CD8-positive, alpha-beta T cell (primary cell): ENCODE measurements at regions of chr12 and their contacts with region 1.

Region 1: DNA sequence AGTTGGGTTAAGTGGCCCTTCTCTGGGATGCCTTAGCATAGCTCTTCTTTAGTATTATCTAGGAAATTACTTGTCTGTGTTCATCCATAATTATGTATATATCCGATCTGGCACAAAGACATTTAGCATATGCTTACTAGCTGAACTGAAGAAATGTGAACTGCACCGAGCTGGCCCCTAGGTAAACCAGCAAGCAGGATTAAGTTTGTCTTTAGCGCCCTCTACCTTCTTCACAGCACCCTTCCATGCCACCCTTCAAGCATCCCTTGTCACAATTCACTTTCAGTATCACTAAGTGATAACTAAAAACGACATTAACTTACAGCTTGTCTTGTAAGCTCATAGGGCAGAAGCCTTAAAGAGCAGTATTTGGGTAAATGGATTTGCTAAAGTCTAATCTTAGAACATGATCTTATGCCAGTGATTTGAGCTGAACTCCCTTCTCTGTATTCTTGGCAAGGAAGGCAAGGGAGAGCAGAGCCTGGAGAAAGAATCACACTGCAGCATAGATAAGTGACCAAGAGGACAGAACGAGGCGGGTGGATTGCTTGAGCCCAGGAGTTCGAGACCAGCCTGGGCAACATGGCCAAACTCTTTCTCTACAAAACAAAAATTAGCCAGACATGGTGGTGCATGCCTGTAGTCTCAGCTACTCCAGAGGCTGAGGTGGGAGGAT is 2.6 kb upstream of the HAL start:
- DNase-seq: peak; percentile 9 to 78 (median 36)
- ATAC-seq: peak; percentile 93
- H3K4me3 ChIP-seq: no peak overlapping the region
- H3K4me3 Mint-ChIP-seq: no peak overlapping the region
- H3K27ac ChIP-seq: no peak overlapping the region
- H3K27ac Mint-ChIP-seq: peak overlapping the region; percentile 24
- H3K4me1 ChIP-seq: no peaks in the 10 kb centered on the region
- H3K4me1 Mint-ChIP-seq: peaks cover 3% of the 10 kb centered on the region
- H3K27me3 ChIP-seq: no peaks in the 10 kb centered on the region
- H3K27me3 Mint-ChIP-seq: no peaks in the 10 kb centered on the region
- CTCF ChIP-seq: peak; percentile 69

Region 2: GRCh38 chr12:95820102-95820703 is 178.5 kb before region 1 on chr12:
- CTCF ChIA-PET with region 1: no interaction called
- POLR2A ChIA-PET with region 1: no interaction called
- intact Hi-C with region 1: loop called in 1 of 2 experiments (anchors 5 kb)
- DNase-seq: peak in 2 of 9 experiments; percentile 16 to 24
- ATAC-seq: no peak
- H3K4me3 ChIP-seq: no peak overlapping the region
- H3K4me3 Mint-ChIP-seq: no peak overlapping the region
- H3K27ac ChIP-seq: no peak overlapping the region
- H3K27ac Mint-ChIP-seq: no peak overlapping the region
- H3K4me1 ChIP-seq: no peaks in the 10 kb centered on the region
- H3K4me1 Mint-ChIP-seq: no peaks in the 10 kb centered on the region
- H3K27me3 ChIP-seq: no peaks in the 10 kb centered on the region
- H3K27me3 Mint-ChIP-seq: peaks cover 17% of the 10 kb centered on the region
- CTCF ChIP-seq: no peak

Region 3: DNA sequence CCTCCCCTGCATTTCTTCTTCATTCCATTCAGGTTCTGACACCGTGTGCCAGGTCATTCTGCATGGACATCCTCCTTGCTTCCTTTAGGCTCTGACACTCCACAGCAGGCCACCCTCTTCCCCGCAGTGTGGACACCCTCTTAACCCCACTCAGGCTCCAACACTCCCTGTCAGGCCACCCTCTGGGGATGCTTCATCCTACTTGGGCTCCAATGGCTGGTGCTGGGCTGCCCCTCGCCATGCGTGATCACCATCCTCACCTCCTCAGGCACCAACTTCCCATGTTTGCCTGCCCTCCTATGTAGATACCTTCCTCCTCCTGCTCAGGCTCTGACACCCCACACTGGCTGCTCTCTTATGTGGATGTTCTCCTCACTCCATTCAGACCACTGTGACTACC is 146.6 kb before region 1 on chr12:
- CTCF ChIA-PET with region 1: no interaction called
- POLR2A ChIA-PET with region 1: no interaction called
- intact Hi-C with region 1: no loop called
- DNase-seq: no peak
- ATAC-seq: no peak
- H3K4me3 ChIP-seq: no peak overlapping the region
- H3K4me3 Mint-ChIP-seq: no peak overlapping the region
- H3K27ac ChIP-seq: no peak overlapping the region
- H3K27ac Mint-ChIP-seq: no peak overlapping the region
- H3K4me1 ChIP-seq: no peaks in the 10 kb centered on the region
- H3K4me1 Mint-ChIP-seq: peaks cover 11% of the 10 kb centered on the region
- H3K27me3 ChIP-seq: peaks cover 0 to 2% of the 10 kb centered on the region in 2 experiments
- H3K27me3 Mint-ChIP-seq: peaks cover 5% of the 10 kb centered on the region
- CTCF ChIP-seq: no peak

Region 4: DNA sequence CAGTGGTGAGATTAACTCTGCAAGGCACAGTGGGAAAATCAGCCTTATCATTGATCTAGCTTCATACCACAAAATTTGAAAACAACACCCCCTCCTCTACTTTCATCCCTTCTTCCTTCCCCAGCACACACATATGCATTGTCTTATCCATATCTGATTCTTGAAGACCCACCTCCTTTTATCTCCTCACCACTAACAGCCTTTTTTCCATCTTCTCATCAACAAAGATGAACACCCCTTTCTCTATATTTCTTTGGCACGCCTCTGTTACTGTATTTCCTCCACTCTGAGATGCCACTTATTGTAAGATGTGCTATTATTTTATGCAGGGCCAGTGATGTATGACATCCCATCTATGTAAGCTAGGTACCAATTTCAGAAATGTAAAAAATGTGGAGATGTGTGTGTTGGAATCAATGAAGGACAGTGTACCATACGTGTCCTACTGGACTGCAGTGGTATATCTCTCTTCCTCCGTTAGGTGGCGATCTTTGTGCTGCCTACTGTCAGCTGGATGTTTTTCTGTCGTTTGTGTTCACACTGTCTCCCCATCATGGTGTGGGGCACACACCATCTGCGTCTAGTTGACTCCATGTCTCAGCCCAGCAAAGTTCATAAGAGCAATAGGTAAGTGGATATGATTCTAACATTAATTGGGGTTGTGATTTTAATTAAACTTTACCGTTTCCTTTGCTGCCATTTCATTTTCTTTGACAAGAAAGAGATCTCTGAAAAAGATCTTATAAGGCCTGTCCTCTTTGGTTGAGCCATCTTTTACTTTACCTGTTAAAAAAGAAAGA is 80.4 kb before region 1 on chr12:
- CTCF ChIA-PET with region 1: interaction called, 105 read pairs
- POLR2A ChIA-PET with region 1: interaction called, 3 read pairs
- intact Hi-C with region 1: loop called in 1 of 2 experiments (anchors 1 kb)
- DNase-seq: peak in 8 of 9 experiments; percentile 3 to 77 (median 45)
- ATAC-seq: peak; percentile 99
- H3K4me3 ChIP-seq: no peak overlapping the region
- H3K4me3 Mint-ChIP-seq: no peak overlapping the region
- H3K27ac ChIP-seq: no peak overlapping the region
- H3K27ac Mint-ChIP-seq: no peak overlapping the region
- H3K4me1 ChIP-seq: no peaks in the 10 kb centered on the region
- H3K4me1 Mint-ChIP-seq: no peaks in the 10 kb centered on the region
- H3K27me3 ChIP-seq: no peaks in the 10 kb centered on the region
- H3K27me3 Mint-ChIP-seq: no peaks in the 10 kb centered on the region
- CTCF ChIP-seq: peak; percentile 81

Region 5: DNA sequence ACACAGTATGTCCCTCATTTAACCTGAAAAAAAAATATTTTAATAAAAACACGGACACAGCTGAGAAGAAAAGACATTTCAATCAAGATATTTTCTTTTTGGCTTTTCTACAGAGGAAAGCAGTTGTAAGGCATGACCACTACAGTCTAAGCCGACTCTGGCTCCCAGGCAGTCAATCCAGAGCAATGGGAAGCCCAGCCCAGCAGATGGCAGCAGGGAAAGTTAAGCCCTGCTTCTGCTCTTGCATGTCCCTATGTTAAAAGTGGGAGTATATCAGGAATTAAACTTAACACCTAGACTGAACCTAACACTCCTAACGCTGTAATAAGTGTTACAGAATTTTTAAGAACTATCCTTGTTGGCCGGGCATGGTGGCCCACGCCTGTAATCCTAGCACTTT is 16.9 kb after region 1 on chr12:
- CTCF ChIA-PET with region 1: interaction called, 16 read pairs
- POLR2A ChIA-PET with region 1: interaction called, 5 read pairs
- intact Hi-C with region 1: no loop called
- DNase-seq: peak in 1 of 9 experiments; percentile 16
- ATAC-seq: no peak
- H3K4me3 ChIP-seq: no peak overlapping the region
- H3K4me3 Mint-ChIP-seq: no peak overlapping the region
- H3K27ac ChIP-seq: no peak overlapping the region
- H3K27ac Mint-ChIP-seq: no peak overlapping the region
- H3K4me1 ChIP-seq: no peaks in the 10 kb centered on the region
- H3K4me1 Mint-ChIP-seq: no peaks in the 10 kb centered on the region
- H3K27me3 ChIP-seq: no peaks in the 10 kb centered on the region
- H3K27me3 Mint-ChIP-seq: no peaks in the 10 kb centered on the region
- CTCF ChIP-seq: no peak